Naive thymus-derived CD4-positive, alpha-beta T cell (primary cell): ENCODE measurements at regions of chr18 and their contacts with region 1.

Region 1: DNA sequence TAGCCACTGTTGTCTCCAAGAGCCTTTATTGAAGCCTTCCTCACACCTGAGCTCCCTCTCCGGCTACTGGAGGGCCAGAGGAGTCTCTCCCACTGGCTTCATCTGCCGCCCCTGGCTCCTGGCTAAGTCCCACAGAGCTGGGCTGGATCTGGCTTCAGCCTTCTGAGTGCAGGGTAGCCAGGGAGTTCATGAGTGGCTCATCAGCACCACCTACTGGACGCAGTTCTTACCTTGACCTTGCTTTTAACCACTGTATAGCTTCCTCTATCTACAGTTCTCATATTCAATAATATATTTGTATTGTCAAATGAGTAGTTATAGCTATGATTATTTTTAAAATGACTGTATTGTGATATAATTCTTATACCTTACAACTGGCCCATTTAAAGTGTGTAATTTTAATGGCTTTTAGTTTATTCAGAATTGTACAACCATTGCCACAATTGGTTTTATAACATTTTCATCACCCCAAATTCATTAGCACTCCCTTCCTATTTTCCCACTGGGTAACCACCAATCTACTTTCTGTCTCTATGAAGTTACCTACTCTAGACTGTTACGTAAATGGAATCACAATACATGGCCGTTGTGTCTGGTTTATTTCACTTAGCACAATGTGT is 17.7 kb downstream of the CNDP1 start:
- DNase-seq: peak; percentile 39 to 69 (median 63)
- ATAC-seq: peak; percentile 97
- H3K4me3 ChIP-seq: no peak overlapping the region
- H3K4me3 Mint-ChIP-seq: no peak overlapping the region
- H3K27ac ChIP-seq: no peak overlapping the region
- H3K27ac Mint-ChIP-seq: peak overlapping the region in 2 of 9 donors; percentile 3 to 70
- H3K4me1 ChIP-seq: no peaks in the 10 kb centered on the region
- H3K4me1 Mint-ChIP-seq: peaks cover 0 to 6% (median 0%) of the 10 kb centered on the region in 7 donors
- H3K27me3 ChIP-seq: no peaks in the 10 kb centered on the region
- H3K27me3 Mint-ChIP-seq: peaks cover 10 to 14% (median 13%) of the 10 kb centered on the region in 5 donors

Region 2: DNA sequence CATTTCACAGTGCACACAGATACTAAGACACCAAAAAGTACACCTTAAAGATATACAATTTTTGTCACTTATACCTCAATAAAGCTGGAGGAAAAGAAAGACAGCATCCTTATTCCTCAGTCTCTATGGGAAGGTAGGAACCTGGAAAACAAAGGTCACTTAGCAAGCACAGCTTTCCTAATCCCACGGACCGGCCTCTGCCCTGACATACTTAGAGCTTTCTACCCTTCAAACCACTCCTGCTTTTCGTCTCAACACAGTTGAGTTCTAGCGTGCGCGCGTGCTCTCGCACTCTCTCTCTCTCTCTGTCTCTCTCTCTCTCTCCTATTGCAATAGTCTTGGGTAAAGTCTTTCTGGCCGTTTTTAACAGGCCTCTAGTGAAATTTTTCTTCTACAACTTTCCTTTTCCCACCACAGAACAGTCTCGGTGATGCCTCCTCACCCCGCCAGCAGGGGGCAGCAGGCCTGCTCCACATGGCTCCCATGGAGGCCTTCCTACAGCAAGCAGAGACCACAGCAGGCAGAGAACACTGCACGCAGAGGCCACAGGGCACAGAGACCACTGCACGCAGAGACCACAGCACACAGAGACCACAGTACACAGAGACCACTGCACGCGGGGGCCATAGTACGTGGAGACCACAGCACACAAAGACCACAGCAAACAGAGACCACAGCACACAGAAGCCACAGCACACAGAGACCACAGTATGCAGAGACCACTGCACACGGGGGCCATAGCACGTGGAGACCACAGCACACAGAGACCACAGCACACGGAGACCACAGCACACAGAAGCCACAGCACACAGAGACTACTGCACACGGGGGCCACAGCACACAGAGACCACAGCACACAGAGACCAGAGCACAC is 511.4 kb before region 1 on chr18:
- CTCF ChIA-PET with region 1: interaction called, 4 read pairs
- POLR2A ChIA-PET with region 1: no interaction called
- intact Hi-C with region 1: loop called in 1 of 2 experiments (anchors 1 kb)
- DNase-seq: peak; percentile 32 to 81 (median 62)
- ATAC-seq: peak; percentile 68
- H3K4me3 ChIP-seq: no peak overlapping the region
- H3K4me3 Mint-ChIP-seq: no peak overlapping the region
- H3K27ac ChIP-seq: no peak overlapping the region
- H3K27ac Mint-ChIP-seq: no peak overlapping the region
- H3K4me1 ChIP-seq: no peaks in the 10 kb centered on the region
- H3K4me1 Mint-ChIP-seq: peaks cover 0 to 5% (median 0%) of the 10 kb centered on the region in 7 donors
- H3K27me3 ChIP-seq: no peaks in the 10 kb centered on the region
- H3K27me3 Mint-ChIP-seq: no peaks in the 10 kb centered on the region

Region 3: DNA sequence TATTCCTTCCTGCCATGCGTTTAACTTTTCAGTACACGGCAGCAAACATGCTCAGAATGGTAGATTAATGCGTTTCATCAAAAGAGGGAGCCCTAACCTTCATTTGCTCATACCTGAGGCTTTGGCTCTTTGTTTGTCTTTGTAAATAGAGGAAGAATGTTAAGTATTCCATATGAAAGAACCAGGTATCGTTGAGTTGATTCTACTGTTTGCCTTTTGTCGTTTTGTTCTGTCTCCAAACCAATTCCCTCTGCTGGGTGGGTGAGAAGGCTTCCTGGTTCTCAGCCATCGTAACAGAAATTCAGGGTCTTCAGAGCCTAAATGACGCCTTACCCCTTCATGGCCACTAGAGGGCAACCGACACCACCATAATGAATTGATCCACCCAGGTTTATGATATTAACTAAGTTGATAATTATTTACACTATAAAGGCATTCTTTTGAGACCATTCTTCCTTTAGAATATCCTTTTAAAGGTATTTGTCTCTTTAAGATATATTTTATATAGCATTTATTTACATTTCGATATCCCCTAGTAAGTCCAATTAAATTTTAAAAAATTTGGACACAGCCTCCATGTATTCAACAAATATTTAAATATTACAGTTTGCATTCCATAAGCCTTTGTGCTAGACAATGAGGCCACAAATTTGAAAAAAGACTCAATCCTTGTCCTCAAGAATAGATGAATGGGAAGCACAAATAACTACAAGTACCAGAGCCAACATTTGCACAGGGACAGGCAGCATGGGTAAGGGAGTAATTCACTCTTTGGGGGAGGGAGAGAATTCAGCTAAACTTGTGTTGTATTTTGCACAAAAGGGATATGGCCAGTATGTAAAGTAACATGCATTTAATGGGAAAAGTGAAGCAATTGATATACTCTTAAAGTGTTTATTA is 355.6 kb before region 1 on chr18:
- CTCF ChIA-PET with region 1: interaction called, 5 read pairs
- POLR2A ChIA-PET with region 1: interaction called, 4 read pairs
- intact Hi-C with region 1: loop called (anchors 1 kb)
- DNase-seq: peak in 7 of 9 donors; percentile 51 to 80 (median 71)
- ATAC-seq: peak; percentile 95
- H3K4me3 ChIP-seq: peak overlapping the region; percentile 55
- H3K4me3 Mint-ChIP-seq: peak overlapping the region; percentile 63 to 90 (median 86)
- H3K27ac ChIP-seq: peak overlapping the region; percentile 63
- H3K27ac Mint-ChIP-seq: peak overlapping the region in 8 of 9 donors; percentile 51 to 90 (median 79)
- H3K4me1 ChIP-seq: no peaks in the 10 kb centered on the region
- H3K4me1 Mint-ChIP-seq: peaks cover 0 to 7% (median 0%) of the 10 kb centered on the region in 7 donors
- H3K27me3 ChIP-seq: no peaks in the 10 kb centered on the region
- H3K27me3 Mint-ChIP-seq: peaks cover 1 to 11% (median 2%) of the 10 kb centered on the region in 5 donors

Region 4: GRCh38 chr18:74310411-74310810 is 241.6 kb before region 1 on chr18:
- CTCF ChIA-PET with region 1: interaction called, 3 read pairs
- POLR2A ChIA-PET with region 1: no interaction called
- intact Hi-C with region 1: loop called in 1 of 2 experiments (anchors 1 kb)
- DNase-seq: peak in 3 of 9 donors; percentile 10 to 15 (median 11)
- ATAC-seq: peak; percentile 46
- H3K4me3 ChIP-seq: no peak overlapping the region
- H3K4me3 Mint-ChIP-seq: no peak overlapping the region
- H3K27ac ChIP-seq: no peak overlapping the region
- H3K27ac Mint-ChIP-seq: no peak overlapping the region
- H3K4me1 ChIP-seq: no peaks in the 10 kb centered on the region
- H3K4me1 Mint-ChIP-seq: peaks cover 0 to 8% (median 0%) of the 10 kb centered on the region in 7 donors
- H3K27me3 ChIP-seq: no peaks in the 10 kb centered on the region
- H3K27me3 Mint-ChIP-seq: peaks cover 22 to 51% (median 35%) of the 10 kb centered on the region in 5 donors

Region 5: DNA sequence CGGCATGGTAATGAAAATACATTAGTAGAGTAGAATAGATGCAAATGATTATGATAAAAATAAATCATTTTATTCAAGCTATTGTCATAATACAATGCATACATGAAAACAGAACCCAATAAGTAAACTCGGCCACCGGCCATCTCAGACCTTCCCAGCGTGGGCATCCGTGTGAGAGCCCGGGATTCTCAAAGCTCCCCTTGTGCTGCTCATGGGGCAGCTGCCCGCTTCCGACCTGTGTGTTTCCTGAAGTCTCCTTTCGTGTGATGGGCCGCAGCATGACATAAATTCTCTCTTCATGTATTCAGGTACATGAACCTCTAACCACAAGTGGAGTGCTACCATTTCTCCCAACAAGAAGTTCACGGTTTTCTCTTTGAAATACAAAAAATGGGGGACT is 69.3 kb before region 1 on chr18:
- CTCF ChIA-PET with region 1: no interaction called
- POLR2A ChIA-PET with region 1: no interaction called
- intact Hi-C with region 1: no loop called
- DNase-seq: no peak
- ATAC-seq: no peak
- H3K4me3 ChIP-seq: no peak overlapping the region
- H3K4me3 Mint-ChIP-seq: no peak overlapping the region
- H3K27ac ChIP-seq: no peak overlapping the region
- H3K27ac Mint-ChIP-seq: no peak overlapping the region
- H3K4me1 ChIP-seq: peaks cover 4 to 5% of the 10 kb centered on the region in 2 donors
- H3K4me1 Mint-ChIP-seq: peaks cover 5 to 19% (median 16%) of the 10 kb centered on the region in 7 donors
- H3K27me3 ChIP-seq: no peaks in the 10 kb centered on the region
- H3K27me3 Mint-ChIP-seq: peaks cover 0 to 12% (median 0%) of the 10 kb centered on the region in 5 donors

Region 6: GRCh38 chr18:76349067-76349715 is 1797.1 kb after region 1 on chr18:
- CTCF ChIA-PET with region 1: no interaction called
- POLR2A ChIA-PET with region 1: no interaction called
- intact Hi-C with region 1: loop called in 1 of 2 experiments (anchors 1 kb)
- DNase-seq: peak in 8 of 9 donors; percentile 42 to 70 (median 60)
- ATAC-seq: peak; percentile 68
- H3K4me3 ChIP-seq: no peak overlapping the region
- H3K4me3 Mint-ChIP-seq: peak overlapping the region in 5 of 10 donors; percentile 4 to 49 (median 12)
- H3K27ac ChIP-seq: no peak overlapping the region
- H3K27ac Mint-ChIP-seq: peak overlapping the region in 2 of 9 donors; percentile 5 to 39
- H3K4me1 ChIP-seq: peaks cover 0 to 3% of the 10 kb centered on the region in 2 donors
- H3K4me1 Mint-ChIP-seq: peaks cover 4 to 9% (median 7%) of the 10 kb centered on the region in 7 donors
- H3K27me3 ChIP-seq: no peaks in the 10 kb centered on the region
- H3K27me3 Mint-ChIP-seq: peaks cover 0 to 9% (median 0%) of the 10 kb centered on the region in 5 donors